PC-3 (cell line): ENCODE measurements at regions of chr20 and their contacts with region 1.

Region 1: GRCh38 chr20:8389381-8390036 is 257.4 kb downstream of the PLCB1 start:
- DNase-seq: peak; percentile 72
- ATAC-seq: peak; percentile 29; the same call in 1 of the 2 replicates
- H3K4me3 ChIP-seq: no peak overlapping the region
- H3K27ac ChIP-seq: no peak overlapping the region
- H3K4me1 ChIP-seq: no peaks in the 10 kb centered on the region
- H3K27me3 ChIP-seq: no peaks in the 10 kb centered on the region
- CTCF ChIP-seq: peak; percentile 74

Region 2: GRCh38 chr20:8115391-8115790 is 274.1 kb before region 1 on chr20:
- CTCF ChIA-PET with region 1: no interaction called
- POLR2A ChIA-PET with region 1: no interaction called
- intact Hi-C with region 1: no loop called
- DNase-seq: no peak
- ATAC-seq: no peak
- H3K4me3 ChIP-seq: no peak overlapping the region
- H3K27ac ChIP-seq: no peak overlapping the region
- H3K4me1 ChIP-seq: no peaks in the 10 kb centered on the region
- H3K27me3 ChIP-seq: peaks cover 34% of the 10 kb centered on the region
- CTCF ChIP-seq: no peak

Region 3: DNA sequence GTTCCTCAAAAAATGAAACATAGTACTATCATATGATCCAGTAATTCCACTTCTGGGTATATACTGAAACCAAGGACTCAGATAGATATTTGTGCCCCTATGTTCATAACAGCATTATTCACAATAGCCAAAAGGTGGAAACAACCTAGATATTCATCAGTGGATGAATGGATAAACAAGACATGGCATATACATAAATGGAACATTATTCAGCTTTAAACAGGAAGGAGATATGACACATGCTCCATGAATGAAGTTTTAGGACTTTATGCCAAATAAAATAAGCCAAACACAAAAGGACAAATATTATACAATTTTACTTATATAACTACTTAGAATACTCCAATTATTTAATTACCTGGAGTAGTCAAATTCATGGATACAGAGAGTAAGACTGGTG is 241.0 kb before region 1 on chr20:
- CTCF ChIA-PET with region 1: no interaction called
- POLR2A ChIA-PET with region 1: no interaction called
- intact Hi-C with region 1: loop called (anchors 1 kb)
- DNase-seq: peak; percentile 36
- ATAC-seq: peak; percentile 39; the same call in 1 of the 2 replicates
- H3K4me3 ChIP-seq: no peak overlapping the region
- H3K27ac ChIP-seq: no peak overlapping the region
- H3K4me1 ChIP-seq: peaks cover 14% of the 10 kb centered on the region
- H3K27me3 ChIP-seq: peaks cover 30% of the 10 kb centered on the region; the same call in 1 of the 2 replicates
- CTCF ChIP-seq: no peak

Region 4: GRCh38 chr20:8331740-8332412 is 57.6 kb before region 1 on chr20:
- CTCF ChIA-PET with region 1: no interaction called
- POLR2A ChIA-PET with region 1: no interaction called
- intact Hi-C with region 1: no loop called
- DNase-seq: peak; percentile 20
- ATAC-seq: no peak
- H3K4me3 ChIP-seq: no peak overlapping the region
- H3K27ac ChIP-seq: no peak overlapping the region
- H3K4me1 ChIP-seq: no peaks in the 10 kb centered on the region
- H3K27me3 ChIP-seq: peaks cover 36% of the 10 kb centered on the region; the same call in 1 of the 2 replicates
- CTCF ChIP-seq: no peak

Region 5: GRCh38 chr20:8454137-8454712 is 64.7 kb after region 1 on chr20:
- CTCF ChIA-PET with region 1: no interaction called
- POLR2A ChIA-PET with region 1: no interaction called
- intact Hi-C with region 1: no loop called
- DNase-seq: peak; percentile 81
- ATAC-seq: peak; percentile 78
- H3K4me3 ChIP-seq: no peak overlapping the region
- H3K27ac ChIP-seq: no peak overlapping the region
- H3K4me1 ChIP-seq: no peaks in the 10 kb centered on the region
- H3K27me3 ChIP-seq: 0 out of 2 replicates have a peak, but pooled peaks cover under 1% of the 10 kb centered on the region
- CTCF ChIP-seq: peak; percentile 68

Region 6: DNA sequence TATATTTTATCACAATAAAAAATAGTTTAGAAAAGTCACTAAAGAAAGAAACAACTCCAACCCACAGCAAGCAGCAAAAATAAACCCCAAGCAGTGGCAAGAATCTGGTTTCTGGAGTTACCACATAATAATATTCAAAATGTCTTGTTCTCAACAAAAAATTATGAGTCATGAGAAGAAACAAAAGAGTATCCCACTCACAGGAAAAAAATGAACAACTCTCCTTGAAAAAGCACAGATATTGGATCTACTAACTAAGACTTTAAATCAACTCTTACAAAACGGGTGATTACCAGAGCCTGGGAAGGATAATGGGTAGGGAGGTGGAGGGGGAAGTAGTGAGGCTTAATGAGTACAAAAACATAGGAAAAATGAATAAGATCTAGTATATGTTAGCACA is 168.2 kb after region 1 on chr20:
- CTCF ChIA-PET with region 1: no interaction called
- POLR2A ChIA-PET with region 1: no interaction called
- intact Hi-C with region 1: no loop called
- DNase-seq: no peak
- ATAC-seq: no peak
- H3K4me3 ChIP-seq: no peak overlapping the region
- H3K27ac ChIP-seq: no peak overlapping the region
- H3K4me1 ChIP-seq: no peaks in the 10 kb centered on the region
- H3K27me3 ChIP-seq: peaks cover 3% of the 10 kb centered on the region; the same call in 1 of the 2 replicates
- CTCF ChIP-seq: no peak